Natural killer cell (primary cell): ENCODE measurements at regions of chr16 and their contacts with region 1.

Region 1: GRCh38 chr16:29973384-29974246 is at the start of gene TAOK2:
- DNase-seq: peak; percentile 93 to 96
- ATAC-seq: peak; percentile 97 to 99 (median 97)
- H3K4me3 ChIP-seq: peak within 1 kb of the TSS; percentile 84
- H3K4me3 Mint-ChIP-seq: peak within 1 kb of the TSS; percentile 95
- H3K27ac ChIP-seq: peak within 1 kb of the TSS; percentile 71
- H3K27ac Mint-ChIP-seq: peak within 1 kb of the TSS; percentile 64 to 96
- H3K4me1 ChIP-seq: peaks cover 30% of the 10 kb centered on the region
- H3K4me1 Mint-ChIP-seq: peaks cover 28 to 52% of the 10 kb centered on the region in 2 donors
- H3K27me3 ChIP-seq: no peaks in the 10 kb centered on the region
- H3K27me3 Mint-ChIP-seq: no peaks in the 10 kb centered on the region
- CTCF ChIP-seq: no peak
- total RNA-seq, gene TAOK2: 35.3 to 42.8 (median 41.5) TPM

Region 2: GRCh38 chr16:29909391-29909790 is 64.2 kb before region 1 on chr16:
- intact Hi-C with region 1: no loop called
- DNase-seq: no peak
- ATAC-seq: no peak
- H3K4me3 ChIP-seq: no peak overlapping the region
- H3K4me3 Mint-ChIP-seq: no peak overlapping the region
- H3K27ac ChIP-seq: no peak overlapping the region
- H3K27ac Mint-ChIP-seq: no peak overlapping the region
- H3K4me1 ChIP-seq: no peaks in the 10 kb centered on the region
- H3K4me1 Mint-ChIP-seq: no peaks in the 10 kb centered on the region
- H3K27me3 ChIP-seq: no peaks in the 10 kb centered on the region
- H3K27me3 Mint-ChIP-seq: no peaks in the 10 kb centered on the region
- CTCF ChIP-seq: no peak

Region 3: DNA sequence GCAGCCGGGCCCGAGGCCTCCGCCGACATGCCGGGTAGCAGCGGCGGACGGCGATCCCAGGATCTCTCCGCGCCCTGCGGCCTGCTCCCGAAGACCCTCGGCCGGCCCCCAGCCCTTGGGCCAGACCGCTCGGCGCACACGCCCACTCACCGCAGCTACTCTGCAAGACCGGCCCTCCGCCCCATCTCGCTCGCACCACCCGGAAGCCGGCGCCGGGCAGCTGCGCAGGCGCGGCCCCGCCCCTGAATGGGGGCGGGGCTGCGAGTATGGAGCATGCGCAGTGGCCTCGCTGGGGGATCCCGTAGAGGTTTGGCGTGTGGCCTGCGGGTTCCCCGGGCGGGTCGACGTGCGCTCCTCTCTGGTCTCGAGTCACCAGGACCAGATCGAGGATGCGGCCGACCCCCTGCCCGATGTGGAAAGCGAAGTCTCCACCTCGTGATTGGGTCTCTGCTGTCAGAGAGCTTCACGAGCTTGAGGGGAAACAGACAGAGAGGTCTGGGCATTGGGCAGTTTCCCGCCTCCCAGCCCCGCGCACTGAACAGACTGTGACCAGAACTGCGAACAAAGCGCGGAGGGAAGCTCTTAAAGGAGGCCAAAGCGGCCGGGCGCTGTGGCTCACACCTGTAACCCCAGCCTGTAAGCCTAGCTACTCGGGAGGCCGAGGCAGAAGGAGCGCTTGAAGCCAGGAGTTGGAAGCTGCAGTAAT is 47.5 kb before region 1 on chr16 and contains the start of gene KCTD13:
- intact Hi-C with region 1: loop called (anchors 1 kb)
- DNase-seq: peak; percentile 92 to 96
- ATAC-seq: peak; percentile 90 to 95 (median 93)
- H3K4me3 ChIP-seq: peak within 1 kb of the TSS; percentile 73
- H3K4me3 Mint-ChIP-seq: peak within 1 kb of the TSS; percentile 97
- H3K27ac ChIP-seq: peak within 1 kb of the TSS; percentile 82
- H3K27ac Mint-ChIP-seq: peak within 1 kb of the TSS; percentile 91 to 97
- H3K4me1 ChIP-seq: peaks cover 21% of the 10 kb centered on the region
- H3K4me1 Mint-ChIP-seq: peaks cover 25 to 42% of the 10 kb centered on the region in 2 donors
- H3K27me3 ChIP-seq: no peaks in the 10 kb centered on the region
- H3K27me3 Mint-ChIP-seq: no peaks in the 10 kb centered on the region
- CTCF ChIP-seq: no peak
- total RNA-seq, gene KCTD13: 36.1 to 54.0 (median 51.7) TPM

Region 4: DNA sequence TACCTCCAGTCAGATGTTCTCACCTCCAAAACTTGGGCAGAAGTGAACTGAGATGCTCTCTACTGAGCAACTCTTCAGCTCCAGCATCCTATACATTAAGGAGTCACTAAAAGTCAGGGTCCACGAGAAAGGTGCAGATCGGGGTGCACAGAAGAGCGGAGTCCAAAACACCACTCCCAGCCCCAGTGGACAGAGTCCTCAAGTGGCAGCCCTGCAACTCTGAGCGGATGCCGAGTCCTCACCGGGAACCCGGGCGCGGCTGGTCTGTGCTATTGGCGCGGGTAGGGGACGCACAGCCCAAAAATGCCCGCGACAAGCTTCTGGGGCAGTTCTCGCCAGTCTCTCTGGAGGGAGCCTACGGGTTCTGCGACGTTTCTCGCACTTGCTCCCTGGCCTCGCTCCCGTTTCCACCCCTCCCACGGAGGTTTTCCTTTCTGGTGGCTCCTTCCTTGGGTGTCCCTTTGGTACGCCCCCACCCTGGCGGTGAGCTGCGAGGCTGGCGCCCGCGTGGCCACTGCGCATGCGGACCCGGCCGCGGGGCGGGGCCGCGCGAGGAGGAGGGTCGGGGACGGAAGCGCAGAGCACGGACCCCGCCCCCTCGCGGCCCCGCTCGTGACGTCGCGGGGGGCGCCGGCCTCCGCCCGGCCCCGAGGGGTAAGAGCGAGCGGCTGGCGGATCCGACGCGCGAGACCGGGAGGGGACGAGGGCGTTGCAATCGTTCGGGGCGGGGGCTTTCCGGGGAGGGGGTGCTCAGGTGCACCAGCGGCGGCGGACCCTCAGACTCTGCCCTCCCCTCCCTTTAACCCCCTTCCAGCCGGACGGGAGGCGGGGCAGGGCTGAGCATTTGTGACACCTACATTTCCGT is 11.9 kb before region 1 on chr16 and contains the start of gene TMEM219:
- intact Hi-C with region 1: loop called (anchors 1 kb)
- DNase-seq: peak; percentile 96 to 97
- ATAC-seq: peak; percentile 89 to 97 (median 90)
- H3K4me3 ChIP-seq: peak within 1 kb of the TSS; percentile 75
- H3K4me3 Mint-ChIP-seq: peak within 1 kb of the TSS; percentile 93
- H3K27ac ChIP-seq: peak within 1 kb of the TSS; percentile 78
- H3K27ac Mint-ChIP-seq: peak within 1 kb of the TSS; percentile 88 to 90
- H3K4me1 ChIP-seq: peaks cover 17% of the 10 kb centered on the region
- H3K4me1 Mint-ChIP-seq: peaks cover 11 to 17% of the 10 kb centered on the region in 2 donors
- H3K27me3 ChIP-seq: no peaks in the 10 kb centered on the region
- H3K27me3 Mint-ChIP-seq: no peaks in the 10 kb centered on the region
- CTCF ChIP-seq: peak; percentile 23
- total RNA-seq, gene TMEM219: 50.2 to 69.5 (median 50.8) TPM

Region 5: GRCh38 chr16:29995911-29996772 is 22.5 kb after region 1 on chr16 and contains the start of gene INO80E:
- intact Hi-C with region 1: loop called (anchors 1 kb)
- DNase-seq: peak; percentile 98
- ATAC-seq: peak; percentile 98 to 100 (median 99)
- H3K4me3 ChIP-seq: peak within 1 kb of the TSS; percentile 96
- H3K4me3 Mint-ChIP-seq: peak within 1 kb of the TSS; percentile 99
- H3K27ac ChIP-seq: peak within 1 kb of the TSS; percentile 98
- H3K27ac Mint-ChIP-seq: peak within 1 kb of the TSS; percentile 97 to 98
- H3K4me1 ChIP-seq: peaks cover 20% of the 10 kb centered on the region
- H3K4me1 Mint-ChIP-seq: peaks cover 13 to 40% of the 10 kb centered on the region in 2 donors
- H3K27me3 ChIP-seq: no peaks in the 10 kb centered on the region
- H3K27me3 Mint-ChIP-seq: no peaks in the 10 kb centered on the region
- CTCF ChIP-seq: no peak
- total RNA-seq, gene INO80E: 75.0 to 107 (median 99.5) TPM